ENCODE measurements at regions of chr3 and their contacts with region 1.

Region 1: DNA sequence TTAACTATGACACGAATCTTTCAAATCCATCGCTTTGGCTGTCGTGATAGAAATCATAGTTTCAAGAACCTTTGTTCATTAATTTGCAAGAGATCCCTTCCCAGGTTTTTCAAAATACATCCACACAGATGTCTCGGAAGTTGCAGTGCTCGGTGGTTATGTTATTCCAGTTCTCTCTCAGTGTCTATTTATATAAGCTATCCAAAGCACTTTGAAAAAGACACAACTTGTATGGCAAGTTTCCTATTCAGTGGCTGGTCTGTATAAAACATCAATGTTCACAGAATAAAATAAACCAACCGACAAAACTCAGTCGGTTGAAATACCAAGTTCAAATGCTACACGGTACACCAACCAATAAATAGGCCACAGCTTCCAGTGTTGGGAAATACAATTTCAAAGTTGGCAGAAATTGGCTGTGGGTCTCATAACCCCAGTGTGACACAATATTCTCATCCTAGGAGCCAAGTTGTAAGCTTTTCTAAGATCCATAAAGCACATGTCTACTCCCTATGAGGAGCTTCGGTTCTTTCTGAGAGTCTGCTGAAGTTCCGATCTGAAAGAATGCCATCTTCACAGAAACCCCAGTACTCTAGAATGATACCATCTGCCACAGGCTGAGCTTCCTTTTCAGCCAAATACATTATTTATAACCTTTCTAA is 23.7 kb downstream of the SATB1 start:
- DNase-seq: no peak
- ATAC-seq: peak; percentile 45
- H3K4me3 ChIP-seq: peak overlapping the region; percentile 2
- H3K4me3 Mint-ChIP-seq: peak overlapping the region; percentile 81
- H3K27ac ChIP-seq: peak overlapping the region; percentile 8 to 31
- H3K27ac Mint-ChIP-seq: peak overlapping the region; percentile 82
- H3K4me1 ChIP-seq: peaks cover 9% of the 10 kb centered on the region
- H3K4me1 Mint-ChIP-seq: peaks cover 100% of the 10 kb centered on the region
- H3K27me3 ChIP-seq: no peaks in the 10 kb centered on the region
- H3K27me3 Mint-ChIP-seq: no peaks in the 10 kb centered on the region
- CTCF ChIP-seq: no peak

Region 2: GRCh38 chr3:17995769-17996168 is 405.7 kb before region 1 on chr3:
- CTCF ChIA-PET with region 1: no interaction called
- POLR2A ChIA-PET with region 1: no interaction called
- intact Hi-C with region 1: no loop called
- DNase-seq: no peak
- ATAC-seq: no peak
- H3K4me3 ChIP-seq: no peak overlapping the region
- H3K4me3 Mint-ChIP-seq: no peak overlapping the region
- H3K27ac ChIP-seq: no peak overlapping the region
- H3K27ac Mint-ChIP-seq: no peak overlapping the region
- H3K4me1 ChIP-seq: no peaks in the 10 kb centered on the region
- H3K4me1 Mint-ChIP-seq: no peaks in the 10 kb centered on the region
- H3K27me3 ChIP-seq: no peaks in the 10 kb centered on the region
- H3K27me3 Mint-ChIP-seq: no peaks in the 10 kb centered on the region
- CTCF ChIP-seq: no peak

Region 3: GRCh38 chr3:18179521-18179920 is 221.9 kb before region 1 on chr3:
- CTCF ChIA-PET with region 1: no interaction called
- POLR2A ChIA-PET with region 1: no interaction called
- intact Hi-C with region 1: no loop called
- DNase-seq: no peak
- ATAC-seq: no peak
- H3K4me3 ChIP-seq: no peak overlapping the region
- H3K4me3 Mint-ChIP-seq: no peak overlapping the region
- H3K27ac ChIP-seq: no peak overlapping the region
- H3K27ac Mint-ChIP-seq: no peak overlapping the region
- H3K4me1 ChIP-seq: no peaks in the 10 kb centered on the region
- H3K4me1 Mint-ChIP-seq: no peaks in the 10 kb centered on the region
- H3K27me3 ChIP-seq: no peaks in the 10 kb centered on the region
- H3K27me3 Mint-ChIP-seq: no peaks in the 10 kb centered on the region
- CTCF ChIP-seq: no peak

Region 4: DNA sequence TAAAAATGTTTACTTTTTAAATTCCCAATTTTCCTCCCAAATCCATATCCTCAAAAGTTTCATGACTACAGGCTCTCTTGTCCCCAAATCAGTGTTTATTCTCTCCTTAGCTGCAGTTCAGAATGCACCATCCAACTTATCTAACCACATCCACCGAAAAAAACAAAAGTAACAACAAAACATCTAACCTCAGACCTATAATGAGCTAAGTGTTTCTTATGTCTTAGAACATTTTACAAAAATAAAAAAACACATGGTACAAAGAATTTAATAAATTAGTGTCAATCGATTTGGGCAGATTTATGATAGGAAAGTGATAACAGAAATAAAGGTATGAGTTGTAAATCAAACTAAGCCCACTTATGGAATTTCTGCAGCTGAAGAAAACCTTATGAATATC is 10.1 kb after region 1 on chr3:
- CTCF ChIA-PET with region 1: interaction called, 6 read pairs
- POLR2A ChIA-PET with region 1: interaction called, 23 read pairs
- intact Hi-C with region 1: loop called in 1 of 2 experiments (anchors 1 kb)
- DNase-seq: peak in 3 of 14 experiments; percentile 43 to 62 (median 46)
- ATAC-seq: peak; percentile 72
- H3K4me3 ChIP-seq: no peak overlapping the region
- H3K4me3 Mint-ChIP-seq: peak overlapping the region; percentile 79
- H3K27ac ChIP-seq: peak overlapping the region in 1 of 2 donors; percentile 53
- H3K27ac Mint-ChIP-seq: peak overlapping the region; percentile 82
- H3K4me1 ChIP-seq: peaks cover 17% of the 10 kb centered on the region
- H3K4me1 Mint-ChIP-seq: peaks cover 89% of the 10 kb centered on the region
- H3K27me3 ChIP-seq: no peaks in the 10 kb centered on the region
- H3K27me3 Mint-ChIP-seq: no peaks in the 10 kb centered on the region
- CTCF ChIP-seq: no peak

Region 5: DNA sequence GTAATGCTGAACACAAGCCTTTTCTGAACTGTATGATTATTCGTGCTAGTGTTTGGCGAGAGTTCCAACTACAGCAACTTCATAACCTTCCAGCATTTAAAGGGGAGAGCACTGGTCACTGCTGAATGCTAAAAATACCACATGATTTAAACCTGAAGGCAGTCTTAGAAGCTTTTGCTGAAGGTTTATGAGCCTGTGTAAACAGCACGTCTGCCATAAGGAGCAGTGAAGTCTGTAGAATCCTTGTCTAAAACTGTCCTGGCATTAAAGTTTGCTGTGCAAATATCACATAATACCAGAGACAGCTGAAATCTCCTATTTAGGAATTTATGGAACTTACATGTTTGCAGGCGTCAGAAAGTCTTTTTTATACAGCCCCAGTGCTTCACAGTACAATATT is 17.8 kb after region 1 on chr3:
- CTCF ChIA-PET with region 1: interaction called, 8 read pairs
- POLR2A ChIA-PET with region 1: interaction called, 20 read pairs
- intact Hi-C with region 1: loop called in 1 of 2 experiments (anchors 2 kb)
- DNase-seq: no peak
- ATAC-seq: no peak
- H3K4me3 ChIP-seq: peak overlapping the region; percentile 10
- H3K4me3 Mint-ChIP-seq: peak overlapping the region; percentile 83
- H3K27ac ChIP-seq: peak overlapping the region in 1 of 2 donors; percentile 44
- H3K27ac Mint-ChIP-seq: peak overlapping the region; percentile 96
- H3K4me1 ChIP-seq: peaks cover 25% of the 10 kb centered on the region
- H3K4me1 Mint-ChIP-seq: peaks cover 96% of the 10 kb centered on the region
- H3K27me3 ChIP-seq: no peaks in the 10 kb centered on the region
- H3K27me3 Mint-ChIP-seq: no peaks in the 10 kb centered on the region
- CTCF ChIP-seq: no peak

Region 6: GRCh38 chr3:18424729-18425640 is 23.6 kb after region 1 on chr3 and contains the start of gene SATB1:
- CTCF ChIA-PET with region 1: interaction called, 8 read pairs
- POLR2A ChIA-PET with region 1: interaction called, 18 read pairs
- intact Hi-C with region 1: no loop called
- DNase-seq: peak; percentile 50 to 82 (median 67)
- ATAC-seq: peak; percentile 33
- H3K4me3 ChIP-seq: peak within 1 kb of the TSS; percentile 90
- H3K4me3 Mint-ChIP-seq: peak within 1 kb of the TSS; percentile 98
- H3K27ac ChIP-seq: peak within 1 kb of the TSS; percentile 74 to 94
- H3K27ac Mint-ChIP-seq: peak within 1 kb of the TSS; percentile 96
- H3K4me1 ChIP-seq: peaks cover 29% of the 10 kb centered on the region
- H3K4me1 Mint-ChIP-seq: peaks cover 81% of the 10 kb centered on the region
- H3K27me3 ChIP-seq: no peaks in the 10 kb centered on the region
- H3K27me3 Mint-ChIP-seq: no peaks in the 10 kb centered on the region
- CTCF ChIP-seq: no peak
- total RNA-seq, gene SATB1: 390 to 393 TPM

Region 7: DNA sequence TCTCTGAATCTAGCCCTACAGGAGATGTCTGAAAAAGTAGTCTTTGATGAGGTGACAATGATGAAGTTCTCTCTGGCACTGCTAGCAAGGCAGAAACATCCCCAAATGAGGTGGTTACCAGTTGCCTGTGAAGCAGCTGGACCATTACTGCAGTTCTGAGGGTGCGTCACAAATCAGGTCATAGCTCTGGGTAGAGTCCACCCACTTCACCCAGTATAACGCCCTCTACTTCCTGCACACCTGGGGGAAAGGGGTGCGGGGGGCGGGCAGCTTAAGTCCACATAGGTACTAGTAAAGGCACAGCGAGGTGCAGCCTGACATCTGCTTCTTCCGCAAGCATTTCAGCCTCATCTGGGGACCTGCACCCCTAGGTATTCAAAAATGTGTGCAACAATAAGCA is 37.2 kb after region 1 on chr3:
- CTCF ChIA-PET with region 1: interaction called, 3 read pairs
- POLR2A ChIA-PET with region 1: interaction called, 10 read pairs
- intact Hi-C with region 1: loop called (anchors 5 kb)
- DNase-seq: peak in 13 of 14 experiments; percentile 37 to 90 (median 62)
- ATAC-seq: peak; percentile 89
- H3K4me3 ChIP-seq: peak overlapping the region; percentile 80
- H3K4me3 Mint-ChIP-seq: peak overlapping the region; percentile 86
- H3K27ac ChIP-seq: peak overlapping the region; percentile 67 to 76
- H3K27ac Mint-ChIP-seq: peak overlapping the region; percentile 88
- H3K4me1 ChIP-seq: peaks cover 13% of the 10 kb centered on the region
- H3K4me1 Mint-ChIP-seq: peaks cover 72% of the 10 kb centered on the region
- H3K27me3 ChIP-seq: no peaks in the 10 kb centered on the region
- H3K27me3 Mint-ChIP-seq: no peaks in the 10 kb centered on the region
- CTCF ChIP-seq: no peak